ENCODE measurements at regions of chr3 and their contacts with region 1.

Region 1: DNA sequence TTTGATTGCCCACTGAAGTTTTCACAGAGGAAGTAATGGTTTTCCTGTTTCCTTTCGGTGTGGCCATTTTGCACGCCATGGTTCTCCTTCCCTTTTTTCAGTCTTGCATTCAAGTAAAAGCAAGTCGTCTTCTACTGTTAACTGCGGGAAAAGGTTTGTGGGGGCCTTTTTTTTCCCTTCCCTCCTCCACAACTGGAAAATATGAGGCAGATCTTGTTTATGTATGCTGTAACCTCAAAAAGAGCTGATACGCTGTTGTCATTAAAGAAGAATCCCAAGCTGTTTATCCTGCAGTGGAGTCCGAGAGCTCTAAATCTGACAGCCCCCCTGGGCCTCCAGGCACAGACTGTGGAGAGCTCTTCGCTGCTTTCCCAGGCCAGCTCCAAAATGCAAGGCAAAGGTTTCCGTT is 40.4 kb downstream of the FILIP1L start:
- DNase-seq: peak; percentile 97
- ATAC-seq: peak; percentile 93
- H3K4me3 ChIP-seq: peak overlapping the region; percentile 15; the same call in 1 of the 2 replicates
- H3K27ac ChIP-seq: peak overlapping the region; percentile 99
- H3K4me1 ChIP-seq: peaks cover 27% of the 10 kb centered on the region
- H3K27me3 ChIP-seq: no peaks in the 10 kb centered on the region
- CTCF ChIP-seq: no peak
- POLR2A ChIP-seq: no peak; the same call in 1 of the 2 replicates
- RAD21 ChIP-seq: peak; percentile 16

Region 2: DNA sequence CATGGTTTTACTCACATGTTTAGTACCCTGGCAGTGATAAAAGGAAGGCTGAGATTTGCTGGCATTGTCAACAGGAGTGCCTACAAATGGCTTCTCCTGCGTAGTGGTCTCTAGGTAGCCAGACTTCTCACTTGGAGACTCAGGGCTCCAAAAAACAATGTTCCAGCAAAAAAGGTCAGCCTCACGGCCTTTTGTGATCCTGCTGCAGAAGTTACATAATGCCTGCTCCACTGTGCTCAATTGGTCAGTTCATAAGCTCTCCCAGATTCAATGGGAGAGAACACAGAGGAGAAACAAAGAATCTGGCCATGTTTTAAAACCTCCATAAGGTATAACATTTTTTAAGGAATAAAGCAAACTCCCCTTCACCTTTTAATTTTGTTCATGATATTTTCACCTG is 332.3 kb before region 1 on chr3:
- CTCF ChIA-PET with region 1: no interaction called
- POLR2A ChIA-PET with region 1: no interaction called
- dilution Hi-C with region 1: no loop called
- in situ Hi-C with region 1: no loop called
- intact Hi-C with region 1: no loop called
- DNase-seq: no peak
- ATAC-seq: no peak
- H3K4me3 ChIP-seq: no peak overlapping the region
- H3K27ac ChIP-seq: no peak overlapping the region
- H3K4me1 ChIP-seq: no peaks in the 10 kb centered on the region; the same call in 1 of the 2 replicates
- H3K27me3 ChIP-seq: no peaks in the 10 kb centered on the region
- CTCF ChIP-seq: no peak
- POLR2A ChIP-seq: no peak
- RAD21 ChIP-seq: no peak

Region 3: GRCh38 chr3:99892332-99892731 is 181.6 kb before region 1 on chr3:
- CTCF ChIA-PET with region 1: no interaction called
- POLR2A ChIA-PET with region 1: interaction called, 13 read pairs
- dilution Hi-C with region 1: no loop called
- in situ Hi-C with region 1: no loop called
- intact Hi-C with region 1: no loop called
- DNase-seq: no peak
- ATAC-seq: no peak
- H3K4me3 ChIP-seq: no peak overlapping the region
- H3K27ac ChIP-seq: no peak overlapping the region
- H3K4me1 ChIP-seq: peaks cover 14% of the 10 kb centered on the region
- H3K27me3 ChIP-seq: no peaks in the 10 kb centered on the region
- CTCF ChIP-seq: no peak
- POLR2A ChIP-seq: no peak
- RAD21 ChIP-seq: no peak

Region 4: GRCh38 chr3:100045696-100046095 is 28.2 kb before region 1 on chr3:
- CTCF ChIA-PET with region 1: no interaction called
- POLR2A ChIA-PET with region 1: interaction called, 4 read pairs
- dilution Hi-C with region 1: no loop called
- in situ Hi-C with region 1: no loop called
- intact Hi-C with region 1: loop called (anchors 2 kb)
- DNase-seq: peak; percentile 99
- ATAC-seq: peak; percentile 69
- H3K4me3 ChIP-seq: no peak overlapping the region
- H3K27ac ChIP-seq: 0 out of 2 replicates have a peak overlapping the region, but pooled peaks have one; percentile 1
- H3K4me1 ChIP-seq: peaks cover 24% of the 10 kb centered on the region
- H3K27me3 ChIP-seq: peaks cover 4% of the 10 kb centered on the region; the same call in 1 of the 2 replicates
- CTCF ChIP-seq: no peak
- POLR2A ChIP-seq: no peak
- RAD21 ChIP-seq: peak; percentile 14

Region 5: GRCh38 chr3:100210772-100211135 is 136.9 kb after region 1 on chr3:
- CTCF ChIA-PET with region 1: interaction called, 3 read pairs
- POLR2A ChIA-PET with region 1: no interaction called
- dilution Hi-C with region 1: no loop called
- in situ Hi-C with region 1: no loop called
- intact Hi-C with region 1: loop called (anchors 2 kb)
- DNase-seq: peak; percentile 95
- ATAC-seq: peak; percentile 74
- H3K4me3 ChIP-seq: no peak overlapping the region
- H3K27ac ChIP-seq: peak overlapping the region; percentile 86; the same call in 1 of the 2 replicates
- H3K4me1 ChIP-seq: peaks cover 18% of the 10 kb centered on the region
- H3K27me3 ChIP-seq: no peaks in the 10 kb centered on the region; the same call in 1 of the 2 replicates
- CTCF ChIP-seq: no peak
- POLR2A ChIP-seq: no peak
- RAD21 ChIP-seq: no peak

Region 6: GRCh38 chr3:100264242-100264641 is 190.3 kb after region 1 on chr3:
- CTCF ChIA-PET with region 1: no interaction called
- POLR2A ChIA-PET with region 1: interaction called, 11 read pairs
- dilution Hi-C with region 1: no loop called
- in situ Hi-C with region 1: loop called (anchors 10 kb)
- intact Hi-C with region 1: no loop called
- DNase-seq: peak; percentile 11
- ATAC-seq: no peak
- H3K4me3 ChIP-seq: no peak overlapping the region
- H3K27ac ChIP-seq: no peak overlapping the region
- H3K4me1 ChIP-seq: peaks cover 9% of the 10 kb centered on the region
- H3K27me3 ChIP-seq: no peaks in the 10 kb centered on the region
- CTCF ChIP-seq: no peak
- POLR2A ChIP-seq: no peak
- RAD21 ChIP-seq: no peak

Region 7: GRCh38 chr3:101676765-101677435 is 1603.0 kb after region 1 on chr3 and contains the start of gene ZBTB11:
- CTCF ChIA-PET with region 1: no interaction called
- POLR2A ChIA-PET with region 1: no interaction called
- dilution Hi-C with region 1: no loop called
- in situ Hi-C with region 1: no loop called
- intact Hi-C with region 1: loop called (anchors 10 kb)
- DNase-seq: peak; percentile 100
- ATAC-seq: peak; percentile 71
- H3K4me3 ChIP-seq: peak within 1 kb of the TSS; percentile 94
- H3K27ac ChIP-seq: peak within 1 kb of the TSS; percentile 87
- H3K4me1 ChIP-seq: peaks cover 4% of the 10 kb centered on the region
- H3K27me3 ChIP-seq: no peaks in the 10 kb centered on the region
- CTCF ChIP-seq: peak; percentile 76
- POLR2A ChIP-seq: peak; percentile 42; the same call in 1 of the 2 replicates
- RAD21 ChIP-seq: peak; percentile 49
- total RNA-seq, gene ZBTB11: 17.2 and 25.8 TPM in 2 replicates